GM18951 (cell line): ENCODE measurements at regions of chr5 and their contacts with region 1.

Region 1: DNA sequence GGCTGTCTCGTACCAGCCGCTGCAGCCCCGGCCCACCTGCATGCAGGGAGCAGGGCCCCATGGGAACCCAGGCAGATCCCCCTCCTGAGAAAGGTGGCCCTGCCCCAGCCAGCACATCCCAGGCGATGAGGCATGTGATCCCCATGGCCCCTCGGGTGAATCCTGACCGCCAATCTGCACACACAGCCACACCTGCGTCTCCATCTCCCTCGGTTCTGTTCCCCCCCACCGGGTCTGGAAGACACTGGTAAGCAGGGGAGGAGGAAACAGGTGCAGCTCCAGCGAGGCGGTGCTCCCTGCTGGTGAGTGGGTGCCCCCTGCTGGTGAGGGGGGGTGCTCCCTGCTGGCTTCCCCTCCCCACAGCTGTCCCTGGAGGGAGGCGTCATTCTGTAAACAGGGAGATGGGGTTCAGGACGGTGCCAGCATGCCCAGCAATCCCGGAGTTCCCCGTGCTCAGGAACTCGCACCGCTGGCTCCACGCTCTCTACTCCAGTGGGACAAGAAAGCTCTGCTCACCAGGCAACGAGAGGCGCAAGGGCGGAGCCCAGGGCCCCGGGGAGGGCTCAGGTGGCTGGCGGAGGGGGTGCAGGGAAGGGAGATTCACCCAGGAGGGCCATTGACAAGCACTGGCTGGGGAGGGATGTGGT is 28.4 kb upstream of the SLC12A7 start:
- POLR2A ChIP-seq: no peak

Region 2: DNA sequence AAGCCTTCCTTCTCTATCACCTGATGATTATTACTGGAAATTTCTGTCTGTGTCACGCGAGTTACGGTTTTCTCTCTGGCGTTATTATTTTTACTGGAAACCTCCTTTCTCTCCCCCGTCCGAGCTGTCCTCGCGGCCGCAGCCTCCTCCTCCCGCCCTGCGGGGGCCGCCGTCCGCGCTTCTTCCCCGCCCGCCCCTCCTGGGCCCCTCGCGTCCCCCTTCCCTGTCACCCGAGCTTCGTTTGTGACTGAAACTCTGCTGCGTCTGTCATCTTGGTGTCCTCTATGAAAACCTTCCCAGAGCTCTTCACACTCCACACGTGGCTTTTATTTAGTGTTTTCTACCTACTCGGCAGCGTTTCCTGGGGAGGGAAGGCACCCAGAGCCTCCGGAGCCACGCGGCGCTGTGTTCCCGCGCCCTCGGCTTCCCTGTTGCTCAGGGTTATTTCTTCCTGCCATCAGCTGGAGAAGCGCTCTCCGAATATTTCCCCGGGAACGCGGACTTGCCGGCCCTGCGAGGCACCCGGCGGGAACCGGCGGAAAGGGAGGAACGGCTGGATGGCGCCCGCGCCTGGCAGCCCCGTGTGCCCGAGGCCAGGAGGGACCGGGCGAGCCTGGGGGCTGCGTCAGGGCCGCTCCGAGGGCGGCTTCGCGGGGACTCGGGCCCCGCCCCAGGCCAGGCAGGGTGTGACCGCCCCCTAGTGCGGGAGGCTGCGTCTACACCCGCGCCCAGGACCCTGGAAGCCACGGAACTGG is 213.7 kb before region 1 on chr5:
- in situ Hi-C with region 1: loop called (anchors 25 kb)
- POLR2A ChIP-seq: no peak

Region 3: GRCh38 chr5:1568201-1568979 is 428.1 kb after region 1 on chr5:
- in situ Hi-C with region 1: no loop called
- POLR2A ChIP-seq: no peak